ENCODE measurements at regions of chr1 and their contacts with region 1.

Region 1: DNA sequence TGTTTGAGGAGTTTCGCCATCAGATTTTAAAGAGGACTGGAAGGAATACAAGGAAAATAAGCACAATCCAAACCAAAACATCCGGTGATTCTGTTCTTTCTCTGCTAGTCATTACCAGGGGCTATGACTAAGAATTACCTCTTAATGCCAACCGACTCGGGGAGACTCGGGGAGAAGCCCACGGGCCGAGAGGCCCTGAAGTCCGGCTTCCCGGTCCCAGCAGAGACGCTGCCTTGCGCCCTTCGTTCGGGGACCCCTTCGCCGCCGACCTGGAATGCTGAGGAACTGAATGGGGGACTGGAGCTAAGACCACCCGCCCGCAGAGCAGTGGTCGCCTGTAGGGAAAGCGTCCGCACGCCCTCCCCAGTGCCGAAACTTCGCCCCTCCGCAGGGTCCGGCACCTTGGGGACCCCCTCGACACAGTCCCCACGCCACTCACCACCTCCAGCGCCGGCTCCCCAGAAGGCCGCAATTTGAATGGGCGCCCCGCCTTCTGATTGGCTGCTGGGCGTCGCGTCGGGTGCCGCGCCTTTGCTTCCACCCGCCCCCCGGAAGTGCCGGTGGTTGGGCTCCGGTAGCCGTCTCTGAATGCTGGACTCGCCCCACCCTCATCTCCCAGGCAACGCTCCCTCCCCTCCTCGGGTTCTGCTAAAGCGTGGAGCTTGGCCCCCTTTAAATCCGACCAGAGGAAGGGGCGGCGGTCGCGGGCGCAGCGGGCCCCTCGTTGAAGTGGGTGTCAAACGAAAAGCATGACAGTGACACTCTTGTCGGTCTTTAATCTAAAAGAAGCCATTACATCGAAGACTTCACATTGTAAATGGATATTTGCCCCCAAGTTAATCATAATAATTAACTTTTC is at the start of gene KIF14:
- H3K4me3 ChIP-seq: peak within 1 kb of the TSS; percentile 94
- H3K27ac ChIP-seq: peak within 1 kb of the TSS; percentile 19; the same call in 1 of the 2 replicates
- H3K4me1 ChIP-seq: no peaks in the 10 kb centered on the region
- CTCF ChIP-seq: peak; percentile 12; the same call in 1 of the 2 replicates

Region 2: DNA sequence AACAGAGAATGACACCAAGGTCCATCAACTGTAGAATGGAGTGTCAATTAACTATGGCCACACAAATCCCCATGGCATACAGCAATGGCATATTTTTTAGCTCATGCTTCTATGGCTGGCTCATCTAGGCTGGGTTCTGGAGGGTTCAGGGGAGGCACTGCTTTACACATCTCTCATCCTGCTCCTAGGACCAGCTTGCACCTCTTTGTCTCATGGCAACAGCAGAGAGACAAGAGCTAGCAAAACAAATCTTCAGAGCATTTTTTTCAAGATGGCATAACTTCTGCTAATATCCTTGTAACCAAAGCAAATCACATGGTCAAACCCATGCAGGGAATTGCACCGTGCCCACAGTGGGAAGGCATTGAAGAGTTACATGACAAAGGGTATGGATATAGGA is 82.3 kb before region 1 on chr1:
- CTCF ChIA-PET with region 1: no interaction called
- POLR2A ChIA-PET with region 1: no interaction called
- H3K4me3 ChIP-seq: no peak overlapping the region
- H3K27ac ChIP-seq: no peak overlapping the region
- H3K4me1 ChIP-seq: no peaks in the 10 kb centered on the region
- CTCF ChIP-seq: no peak

Region 3: GRCh38 chr1:200588698-200589097 is 31.8 kb before region 1 on chr1:
- CTCF ChIA-PET with region 1: no interaction called
- POLR2A ChIA-PET with region 1: no interaction called
- H3K4me3 ChIP-seq: no peak overlapping the region
- H3K27ac ChIP-seq: no peak overlapping the region
- H3K4me1 ChIP-seq: no peaks in the 10 kb centered on the region
- CTCF ChIP-seq: no peak

Region 4: GRCh38 chr1:200634261-200635122 is 14.0 kb after region 1 on chr1:
- CTCF ChIA-PET with region 1: interaction called, 14 read pairs
- POLR2A ChIA-PET with region 1: no interaction called
- H3K4me3 ChIP-seq: no peak overlapping the region
- H3K27ac ChIP-seq: no peak overlapping the region
- H3K4me1 ChIP-seq: no peaks in the 10 kb centered on the region
- CTCF ChIP-seq: no peak

Region 5: DNA sequence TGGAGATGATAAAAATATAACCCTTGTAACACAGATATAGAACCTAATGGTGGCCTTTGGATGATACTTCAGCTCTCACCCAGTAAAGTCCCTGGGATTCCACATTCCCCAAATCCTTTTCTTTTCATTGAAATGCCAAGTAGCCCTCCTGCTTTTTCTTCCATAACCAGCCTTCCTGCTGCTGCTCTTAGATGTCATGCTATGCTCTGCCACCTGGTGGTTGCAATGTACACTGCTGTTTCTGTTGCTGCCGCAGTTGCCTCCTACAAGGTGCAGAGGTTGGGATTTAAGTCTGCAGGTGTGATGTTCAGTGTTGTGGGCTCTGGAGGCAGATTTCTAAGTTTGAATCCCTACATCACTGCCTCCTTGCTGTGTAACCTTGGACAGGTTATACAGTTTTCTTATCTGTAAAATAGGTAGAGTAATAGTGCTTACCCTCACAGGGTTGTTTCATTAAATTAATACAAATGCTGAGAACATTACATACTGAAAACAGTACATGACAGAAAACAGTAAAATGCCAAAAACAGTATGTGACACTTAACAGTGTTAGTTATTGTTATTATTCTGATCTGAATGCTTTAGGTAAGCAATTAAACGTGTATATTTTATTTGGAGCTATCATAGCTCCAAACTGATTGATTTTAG is 182.5 kb after region 1 on chr1:
- CTCF ChIA-PET with region 1: interaction called, 48 read pairs
- POLR2A ChIA-PET with region 1: no interaction called
- H3K4me3 ChIP-seq: no peak overlapping the region
- H3K27ac ChIP-seq: no peak overlapping the region
- H3K4me1 ChIP-seq: no peaks in the 10 kb centered on the region
- CTCF ChIP-seq: peak; percentile 63; the same call in 1 of the 2 replicates

Region 6: GRCh38 chr1:200837931-200838571 is 217.5 kb after region 1 on chr1:
- CTCF ChIA-PET with region 1: interaction called, 15 read pairs
- POLR2A ChIA-PET with region 1: no interaction called
- H3K4me3 ChIP-seq: no peak overlapping the region
- H3K27ac ChIP-seq: no peak overlapping the region
- H3K4me1 ChIP-seq: no peaks in the 10 kb centered on the region
- CTCF ChIP-seq: no peak

Measured in HEK293 (cell line).